B cell (primary cell): ENCODE measurements at regions of chr5 and their contacts with region 1.

Region 1: DNA sequence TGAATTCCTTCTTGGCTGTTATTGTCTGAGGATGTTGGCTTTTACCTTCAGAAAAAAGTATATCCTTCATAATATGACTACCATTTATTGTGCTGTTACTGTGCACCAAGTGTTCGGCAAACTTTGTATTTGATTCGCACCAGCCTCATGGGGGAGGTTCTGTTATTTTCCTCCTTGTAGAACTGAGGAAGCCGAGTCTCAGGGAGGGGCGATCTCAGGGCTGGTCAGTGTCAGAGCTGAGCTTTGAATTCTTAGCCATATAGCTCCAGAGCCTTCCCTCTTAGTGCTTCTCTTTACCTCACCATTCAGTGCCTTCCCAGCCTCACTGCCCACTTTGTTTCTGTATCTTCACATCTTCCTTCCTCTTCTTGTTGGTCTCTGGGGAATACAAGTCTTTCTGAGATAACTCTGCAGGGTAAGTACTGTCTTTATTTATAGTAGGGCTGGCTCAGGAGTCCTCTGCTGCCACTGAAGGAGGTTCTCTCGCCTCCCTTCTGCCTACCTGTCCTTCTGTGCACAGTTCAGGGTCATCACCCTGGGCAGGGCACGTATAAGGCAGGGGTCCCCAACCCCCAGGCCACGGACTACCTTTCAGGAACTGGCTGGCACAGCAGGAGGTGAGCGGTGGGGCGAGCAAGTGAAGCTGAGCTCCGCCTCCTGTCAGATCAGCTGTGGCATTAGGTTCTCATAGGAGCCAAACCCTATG is 48.4 kb downstream of the GALNT10 start:
- DNase-seq: peak; percentile 84
- ATAC-seq: peak; percentile 97
- H3K4me3 ChIP-seq: peak overlapping the region in 4 of 5 experiments; percentile 32 to 65 (median 46)
- H3K4me3 Mint-ChIP-seq: peak overlapping the region; percentile 65
- H3K27ac ChIP-seq: peak overlapping the region; percentile 42 to 45
- H3K27ac Mint-ChIP-seq: peak overlapping the region; percentile 77
- H3K4me1 ChIP-seq: peaks cover 60 to 62% of the 10 kb centered on the region in 2 donors
- H3K4me1 Mint-ChIP-seq: peaks cover 79% of the 10 kb centered on the region
- H3K27me3 ChIP-seq: no peaks in the 10 kb centered on the region
- H3K27me3 Mint-ChIP-seq: no peaks in the 10 kb centered on the region
- CTCF ChIP-seq: no peak

Region 2: DNA sequence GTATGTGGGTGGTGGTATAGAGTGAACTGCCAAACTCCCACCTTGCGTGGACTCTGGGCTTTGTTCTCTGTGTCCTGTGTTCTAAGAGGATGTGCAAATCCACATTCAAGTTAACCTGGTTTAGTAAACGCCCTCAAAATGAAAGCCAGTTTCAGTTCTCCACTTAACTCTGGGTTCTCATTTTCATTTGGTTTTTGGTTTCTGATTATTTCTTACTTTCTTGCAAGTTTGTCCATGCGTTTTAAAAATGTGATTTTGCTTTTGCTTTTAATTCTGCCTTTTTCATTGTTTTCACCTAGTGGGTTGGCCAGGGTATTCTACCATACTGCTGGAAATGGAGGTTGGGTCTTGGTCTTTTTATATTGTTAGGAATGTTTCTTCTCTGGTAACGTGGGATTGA is 10.2 kb before region 1 on chr5:
- CTCF ChIA-PET with region 1: interaction called, 4 read pairs
- POLR2A ChIA-PET with region 1: no interaction called
- intact Hi-C with region 1: loop called (anchors 1 kb)
- DNase-seq: peak; percentile 60
- ATAC-seq: peak; percentile 91
- H3K4me3 ChIP-seq: peak overlapping the region in 4 of 5 experiments; percentile 6 to 69 (median 45)
- H3K4me3 Mint-ChIP-seq: peak overlapping the region; percentile 89
- H3K27ac ChIP-seq: peak overlapping the region; percentile 75 to 77
- H3K27ac Mint-ChIP-seq: peak overlapping the region; percentile 84
- H3K4me1 ChIP-seq: peaks cover 31 to 35% of the 10 kb centered on the region in 2 donors
- H3K4me1 Mint-ChIP-seq: peaks cover 44% of the 10 kb centered on the region
- H3K27me3 ChIP-seq: no peaks in the 10 kb centered on the region
- H3K27me3 Mint-ChIP-seq: no peaks in the 10 kb centered on the region
- CTCF ChIP-seq: no peak

Region 3: DNA sequence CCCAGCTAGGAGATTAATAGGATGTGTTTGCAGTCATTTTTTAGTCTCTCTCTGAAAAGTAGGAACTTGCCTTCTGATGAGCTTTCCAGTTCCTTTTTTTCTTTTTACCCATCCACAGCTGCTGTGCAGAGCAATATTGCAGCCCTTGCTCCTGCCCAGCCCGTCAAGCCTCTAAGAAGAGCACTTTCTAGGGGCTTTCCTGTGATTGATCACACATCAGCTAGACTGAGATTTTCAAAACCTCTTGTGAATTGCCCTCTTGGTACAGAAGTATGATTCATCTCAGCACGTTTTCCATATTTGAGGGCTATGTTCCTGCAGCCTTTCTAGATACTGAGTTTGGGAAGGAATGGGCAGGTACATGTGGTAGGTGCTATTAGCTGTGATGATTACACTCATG is 45.5 kb after region 1 on chr5:
- CTCF ChIA-PET with region 1: interaction called, 4 read pairs
- POLR2A ChIA-PET with region 1: no interaction called
- intact Hi-C with region 1: loop called (anchors 5 kb)
- DNase-seq: peak; percentile 55
- ATAC-seq: peak; percentile 91
- H3K4me3 ChIP-seq: no peak overlapping the region
- H3K4me3 Mint-ChIP-seq: peak overlapping the region; percentile 5
- H3K27ac ChIP-seq: no peak overlapping the region
- H3K27ac Mint-ChIP-seq: peak overlapping the region; percentile 57
- H3K4me1 ChIP-seq: peaks cover 17 to 23% of the 10 kb centered on the region in 2 donors
- H3K4me1 Mint-ChIP-seq: peaks cover 33% of the 10 kb centered on the region
- H3K27me3 ChIP-seq: no peaks in the 10 kb centered on the region
- H3K27me3 Mint-ChIP-seq: no peaks in the 10 kb centered on the region
- CTCF ChIP-seq: no peak